Activated CD4-positive, alpha-beta T cell treated with anti-CD3 and anti-CD28 coated beads for 36 hours (primary cell): ENCODE measurements at regions of chrX and their contacts with region 1.

Region 1: GRCh38 chrX:147537172-147537571 is 374.5 kb upstream of the FMR1 start:
- DNase-seq: no peak
- ATAC-seq: no peak
- H3K4me3 Mint-ChIP-seq: no peak overlapping the region
- H3K27ac Mint-ChIP-seq: no peak overlapping the region
- H3K4me1 Mint-ChIP-seq: no peaks in the 10 kb centered on the region
- H3K27me3 Mint-ChIP-seq: no peaks in the 10 kb centered on the region

Region 2: GRCh38 chrX:147494365-147494764 is 42.8 kb before region 1 on chrX:
- CTCF ChIA-PET with region 1: no interaction called
- POLR2A ChIA-PET with region 1: no interaction called
- intact Hi-C with region 1: loop called in 1 of 2 experiments (anchors 1 kb)
- DNase-seq: no peak
- ATAC-seq: no peak
- H3K4me3 Mint-ChIP-seq: no peak overlapping the region
- H3K27ac Mint-ChIP-seq: no peak overlapping the region
- H3K4me1 Mint-ChIP-seq: no peaks in the 10 kb centered on the region
- H3K27me3 Mint-ChIP-seq: peaks cover 2% of the 10 kb centered on the region